ENCODE measurements at regions of chr14 and their contacts with region 1.

Region 1: GRCh38 chr14:89618811-89619551 is 201.9 kb upstream of the FOXN3 start:
- DNase-seq: peak; percentile 89

Region 2: GRCh38 chr14:89303457-89304435 is 315.2 kb before region 1 on chr14:
- intact Hi-C with region 1: loop called (anchors 10 kb)
- DNase-seq: peak; percentile 85

Region 3: GRCh38 chr14:89658977-89659670 is 40.1 kb after region 1 on chr14:
- intact Hi-C with region 1: loop called (anchors 5 kb)
- DNase-seq: no peak

Region 4: DNA sequence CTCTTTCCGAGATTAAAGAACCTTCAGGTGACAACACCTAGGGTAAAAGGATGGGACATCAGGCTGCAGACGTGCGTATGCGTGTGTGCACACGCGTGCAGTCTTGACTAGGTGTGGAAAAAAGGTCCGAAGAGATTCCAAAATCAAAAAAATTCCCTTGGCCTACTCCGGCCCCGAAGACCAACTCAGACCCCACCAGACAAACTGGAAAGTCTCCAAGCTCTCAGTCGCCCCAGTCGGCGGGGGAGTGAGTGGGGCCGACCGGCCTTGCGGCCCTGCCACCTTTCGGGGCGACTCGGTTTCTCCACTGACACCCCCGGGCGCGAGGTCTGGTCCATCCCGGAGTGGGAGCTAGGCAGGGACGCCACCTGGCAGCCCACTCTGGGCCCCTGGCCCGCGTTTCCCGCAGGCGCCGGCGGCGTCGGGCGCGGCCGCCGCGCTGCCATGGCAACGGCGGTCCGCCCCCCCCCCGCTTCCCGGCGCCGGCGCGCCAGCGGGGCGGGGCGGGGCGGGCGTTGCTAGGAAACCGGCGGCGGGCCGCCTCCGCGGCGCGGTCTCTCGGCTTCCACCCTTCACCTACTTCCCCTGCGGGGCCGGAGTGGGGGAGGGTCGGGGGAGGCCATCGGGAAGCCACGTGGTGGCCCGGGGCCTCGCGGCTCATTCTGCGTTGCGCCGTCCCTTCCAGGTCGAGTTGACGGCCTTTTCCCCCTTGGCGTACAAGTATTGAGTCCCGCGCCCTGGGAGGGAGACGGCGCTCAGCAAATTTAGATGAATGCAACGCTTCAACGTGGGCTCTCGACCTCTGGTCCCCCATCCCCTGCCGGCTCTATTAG is 82.4 kb after region 1 on chr14:
- intact Hi-C with region 1: loop called (anchors 2 kb)
- DNase-seq: peak; percentile 97

Measured in cardiac septum (tissue), 1 donor.